Ascending aorta (tissue), 2 donors: ENCODE measurements at regions of chr5 and their contacts with region 1.

Region 1: GRCh38 chr5:150217873-150218692 is 28.2 kb downstream of the SLC6A7 start:
- DNase-seq: peak; percentile 28 to 87
- H3K4me3 ChIP-seq: no peak overlapping the region
- H3K27ac ChIP-seq: no peak overlapping the region
- H3K4me1 ChIP-seq: peaks cover 0 to 16% of the 10 kb centered on the region in 2 donors
- H3K27me3 ChIP-seq: no peaks in the 10 kb centered on the region
- CTCF ChIP-seq: peak; percentile 81 to 93 (median 89)

Region 2: DNA sequence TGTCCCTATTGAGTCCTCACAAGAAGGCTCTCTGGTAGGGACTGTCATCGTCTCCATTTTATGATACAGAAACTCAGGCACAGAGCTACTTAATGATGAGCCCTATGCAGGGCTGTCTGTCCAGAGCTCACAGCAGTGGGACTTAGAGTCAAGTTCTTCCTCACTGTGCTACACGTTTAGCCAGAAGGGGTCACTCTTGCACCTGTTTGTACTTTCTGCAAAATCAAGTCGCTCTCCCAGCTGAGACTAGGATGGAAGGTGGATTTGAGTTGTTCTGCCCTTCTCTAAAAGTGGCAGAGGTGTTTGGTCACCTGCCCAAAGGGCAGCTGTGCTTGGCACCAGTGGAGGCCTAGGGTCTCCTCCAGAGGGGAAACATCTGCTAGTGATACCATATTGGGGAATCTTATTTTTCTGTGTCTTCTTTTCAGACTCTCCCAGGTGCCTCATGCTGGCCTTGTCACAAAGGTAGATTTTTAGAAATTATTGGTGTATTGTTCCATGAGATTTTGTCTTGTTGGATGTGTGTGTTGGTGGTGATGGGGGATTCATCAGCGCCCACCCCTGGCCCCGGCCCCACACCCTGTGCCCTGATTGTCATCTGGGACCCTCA is 383.7 kb before region 1 on chr5:
- intact Hi-C with region 1: loop called (anchors 10 kb)
- DNase-seq: peak in 1 of 2 donors; percentile 79
- H3K4me3 ChIP-seq: no peak overlapping the region
- H3K27ac ChIP-seq: no peak overlapping the region
- H3K4me1 ChIP-seq: no peaks in the 10 kb centered on the region
- H3K27me3 ChIP-seq: no peaks in the 10 kb centered on the region
- CTCF ChIP-seq: peak; percentile 61 to 74 (median 73)

Region 3: DNA sequence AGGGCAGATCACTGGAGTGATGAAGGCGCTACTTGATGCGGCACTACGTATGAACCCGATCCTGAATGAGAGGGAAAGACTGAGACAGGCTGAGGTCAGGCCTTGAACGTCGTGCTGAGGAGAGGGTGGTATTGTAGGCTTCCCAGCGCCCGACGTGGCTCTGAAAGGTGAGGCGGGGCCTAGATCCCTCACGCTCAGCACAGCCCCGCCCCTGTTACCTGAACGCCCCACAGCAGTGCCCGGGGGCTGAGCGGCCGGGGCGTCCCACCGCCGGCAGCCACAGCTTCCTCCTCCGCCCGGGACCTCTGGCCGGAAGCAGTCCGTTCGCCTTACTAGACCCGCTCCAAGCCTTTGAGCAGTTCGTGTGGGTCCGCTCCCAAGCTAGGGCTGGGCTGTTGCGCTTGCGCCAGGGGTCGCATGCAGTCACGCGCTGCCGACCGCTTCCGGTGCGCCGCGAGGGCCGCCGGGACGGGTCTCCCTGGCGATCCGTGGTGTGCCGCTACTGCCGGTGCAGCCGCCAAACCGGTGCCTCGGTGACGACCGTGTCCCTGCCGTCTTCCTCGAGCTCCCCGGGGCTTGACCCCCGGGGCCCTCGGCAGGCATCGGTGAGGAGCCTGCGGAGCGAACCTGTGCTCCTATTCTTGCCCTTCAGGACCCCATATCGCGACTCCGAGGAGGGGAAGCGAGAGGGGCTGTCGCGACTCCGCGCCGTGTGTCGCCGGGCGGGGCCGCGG is 217.7 kb before region 1 on chr5 and contains the starts of genes HMGXB3 and TIGD6:
- intact Hi-C with region 1: loop called (anchors 5 kb)
- DNase-seq: peak; percentile 73 to 95
- H3K4me3 ChIP-seq: peak within 1 kb of the TSS; percentile 79 to 98
- H3K27ac ChIP-seq: peak within 1 kb of the TSS; percentile 93 to 95
- H3K4me1 ChIP-seq: peaks cover 8 to 24% of the 10 kb centered on the region in 2 donors
- H3K27me3 ChIP-seq: no peaks in the 10 kb centered on the region
- CTCF ChIP-seq: no peak
- total RNA-seq, gene HMGXB3: 56.4 TPM
- total RNA-seq, gene TIGD6: 4.2 TPM

Region 4: GRCh38 chr5:150022163-150022540 is 195.9 kb before region 1 on chr5:
- intact Hi-C with region 1: loop called (anchors 10 kb)
- DNase-seq: no peak
- H3K4me3 ChIP-seq: no peak overlapping the region
- H3K27ac ChIP-seq: peak overlapping the region; percentile 43 to 78
- H3K4me1 ChIP-seq: peaks cover 0 to 30% of the 10 kb centered on the region in 2 donors
- H3K27me3 ChIP-seq: no peaks in the 10 kb centered on the region
- CTCF ChIP-seq: no peak

Region 5: DNA sequence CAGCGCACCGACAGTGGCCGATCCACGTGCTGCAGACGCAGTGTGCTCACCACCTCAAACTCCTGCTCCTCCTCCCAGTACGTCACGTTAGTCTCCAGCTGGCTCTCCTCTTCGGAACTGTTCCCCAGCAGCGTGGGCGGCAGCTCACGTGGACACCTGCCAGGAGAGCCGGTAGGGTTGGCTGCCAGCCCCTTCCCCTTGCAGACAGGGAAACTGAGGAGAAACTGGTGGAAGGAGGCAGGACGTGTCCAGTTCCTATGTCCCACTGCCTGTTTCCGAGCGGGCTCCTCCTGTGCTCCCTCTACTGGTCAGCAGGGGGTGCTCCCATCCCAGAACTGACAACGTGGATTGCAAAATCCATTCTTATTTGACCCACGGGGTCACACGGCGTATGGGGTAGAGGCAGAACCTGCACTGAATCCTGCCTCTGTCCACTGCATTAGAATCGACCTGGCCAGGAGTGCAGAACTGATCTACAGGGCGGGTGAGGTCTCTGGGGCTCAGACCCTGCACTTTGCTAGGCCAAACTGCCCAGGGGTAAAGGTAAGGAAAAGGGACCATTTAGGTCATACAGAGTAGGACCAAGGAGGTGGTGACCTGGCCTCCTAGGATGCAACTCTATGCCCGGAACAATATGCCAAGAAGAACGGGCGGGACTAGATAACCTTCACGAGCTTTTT is 88.1 kb before region 1 on chr5:
- intact Hi-C with region 1: loop called (anchors 1 kb)
- DNase-seq: peak in 1 of 2 donors; percentile 86
- H3K4me3 ChIP-seq: no peak overlapping the region
- H3K27ac ChIP-seq: peak overlapping the region; percentile 98 to 99
- H3K4me1 ChIP-seq: peaks cover 16 to 47% of the 10 kb centered on the region in 2 donors
- H3K27me3 ChIP-seq: no peaks in the 10 kb centered on the region
- CTCF ChIP-seq: peak; percentile 92 to 96 (median 95)

Region 6: GRCh38 chr5:150161242-150162141 is 56.6 kb before region 1 on chr5:
- intact Hi-C with region 1: loop called (anchors 1 kb)
- DNase-seq: peak in 1 of 2 donors; percentile 93
- H3K4me3 ChIP-seq: no peak overlapping the region
- H3K27ac ChIP-seq: peak overlapping the region; percentile 98 to 99
- H3K4me1 ChIP-seq: peaks cover 23 to 56% of the 10 kb centered on the region in 2 donors
- H3K27me3 ChIP-seq: no peaks in the 10 kb centered on the region
- CTCF ChIP-seq: peak; percentile 91 to 98 (median 96)

Region 7: GRCh38 chr5:150175076-150175935 is 42.8 kb before region 1 on chr5:
- intact Hi-C with region 1: loop called (anchors 5 kb)
- DNase-seq: no peak
- H3K4me3 ChIP-seq: no peak overlapping the region
- H3K27ac ChIP-seq: peak overlapping the region in 1 of 2 donors; percentile 95
- H3K4me1 ChIP-seq: peaks cover 11 to 33% of the 10 kb centered on the region in 2 donors
- H3K27me3 ChIP-seq: no peaks in the 10 kb centered on the region
- CTCF ChIP-seq: peak in 2 of 3 experiments; percentile 16 to 50

Region 8: DNA sequence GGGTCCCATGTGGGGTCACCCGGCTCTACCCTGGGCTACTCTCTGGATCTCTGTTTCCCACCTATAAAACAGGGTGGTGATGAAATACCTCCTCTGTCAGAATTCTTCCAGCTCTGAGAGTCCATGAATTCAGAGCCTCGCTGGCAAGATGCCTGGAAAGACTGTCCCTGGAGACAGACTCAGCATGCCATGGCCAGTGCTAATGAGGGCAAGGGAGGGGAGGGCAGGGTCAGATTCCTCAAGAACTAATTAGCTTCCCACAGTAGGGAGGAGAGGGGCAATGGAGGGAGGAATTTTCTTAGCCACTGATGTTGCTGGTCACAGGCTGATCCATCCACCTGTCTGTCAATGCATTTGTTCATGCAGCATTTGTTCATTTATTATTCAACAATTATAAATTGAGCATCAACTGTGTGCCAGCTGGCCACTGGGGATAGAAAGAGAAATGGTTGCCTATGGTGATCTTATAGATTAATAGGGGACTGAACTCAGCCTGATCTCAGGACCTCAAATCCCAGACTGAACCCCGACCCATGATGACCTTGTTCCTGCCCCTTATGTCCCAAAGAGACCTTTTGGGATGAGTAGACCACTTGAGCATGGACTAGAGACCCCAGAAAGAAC is 427.1 kb after region 1 on chr5:
- intact Hi-C with region 1: no loop called
- DNase-seq: peak in 1 of 2 donors; percentile 92
- H3K4me3 ChIP-seq: peak overlapping the region; percentile 10 to 19
- H3K27ac ChIP-seq: peak overlapping the region; percentile 95 to 96
- H3K4me1 ChIP-seq: peaks cover 53 to 86% of the 10 kb centered on the region in 2 donors
- H3K27me3 ChIP-seq: no peaks in the 10 kb centered on the region
- CTCF ChIP-seq: no peak